HEK293 (cell line): ENCODE measurements at regions of chr11 and their contacts with region 1.

Region 1: GRCh38 chr11:96389720-96390487 is at the starts of genes CCDC82 and JRKL:
- H3K4me3 ChIP-seq: peak within 1 kb of the TSS; percentile 93
- H3K27ac ChIP-seq: peak within 1 kb of the TSS; percentile 86
- H3K4me1 ChIP-seq: no peaks in the 10 kb centered on the region
- CTCF ChIP-seq: no peak; the same call in 1 of the 2 replicates

Region 2: DNA sequence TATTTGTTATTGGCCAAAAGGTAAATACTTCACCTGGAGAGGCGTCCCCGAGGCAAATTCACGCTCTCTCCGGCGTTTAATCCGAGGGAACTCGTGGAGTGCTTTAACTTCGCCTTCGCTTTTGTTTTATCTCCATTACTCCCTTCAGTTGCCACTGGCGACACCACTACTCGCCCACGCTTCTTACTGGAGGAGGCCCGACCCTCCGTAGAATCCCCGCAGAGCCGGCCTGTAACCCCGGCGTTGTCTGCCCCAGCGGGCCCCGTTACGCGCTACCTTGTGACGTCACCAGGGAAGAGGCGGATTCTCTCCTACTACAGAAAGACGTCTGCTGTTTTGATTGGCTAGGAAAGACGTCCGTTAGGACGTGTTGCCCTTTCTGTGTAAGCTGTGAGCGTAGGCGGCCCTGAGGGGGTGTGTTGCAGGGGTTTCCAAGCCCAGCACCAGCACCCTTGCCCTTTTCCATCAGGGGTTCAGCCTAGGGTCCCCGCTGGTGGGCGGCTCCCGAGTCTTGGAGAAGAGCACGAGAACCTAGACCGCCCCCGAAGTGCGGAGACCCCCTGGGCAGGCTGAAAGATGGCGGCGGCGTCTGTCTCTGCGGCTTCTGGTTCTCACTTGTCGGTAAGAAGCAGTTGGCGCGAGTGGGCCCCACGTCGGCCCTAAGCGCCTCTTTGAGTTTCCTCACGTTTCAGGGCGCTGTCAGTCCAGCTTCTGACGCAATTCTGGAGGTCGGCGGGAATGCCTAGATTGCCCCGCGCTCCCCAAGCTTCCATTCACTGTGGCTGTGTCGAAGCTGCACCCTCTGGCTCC is 599.6 kb before region 1 on chr11 and contains the start of gene CEP57:
- CTCF ChIA-PET with region 1: no interaction called
- POLR2A ChIA-PET with region 1: interaction called, 19 read pairs
- H3K4me3 ChIP-seq: peak within 1 kb of the TSS; percentile 99
- H3K27ac ChIP-seq: peak within 1 kb of the TSS; percentile 80
- H3K4me1 ChIP-seq: no peaks in the 10 kb centered on the region
- CTCF ChIP-seq: no peak

Region 3: DNA sequence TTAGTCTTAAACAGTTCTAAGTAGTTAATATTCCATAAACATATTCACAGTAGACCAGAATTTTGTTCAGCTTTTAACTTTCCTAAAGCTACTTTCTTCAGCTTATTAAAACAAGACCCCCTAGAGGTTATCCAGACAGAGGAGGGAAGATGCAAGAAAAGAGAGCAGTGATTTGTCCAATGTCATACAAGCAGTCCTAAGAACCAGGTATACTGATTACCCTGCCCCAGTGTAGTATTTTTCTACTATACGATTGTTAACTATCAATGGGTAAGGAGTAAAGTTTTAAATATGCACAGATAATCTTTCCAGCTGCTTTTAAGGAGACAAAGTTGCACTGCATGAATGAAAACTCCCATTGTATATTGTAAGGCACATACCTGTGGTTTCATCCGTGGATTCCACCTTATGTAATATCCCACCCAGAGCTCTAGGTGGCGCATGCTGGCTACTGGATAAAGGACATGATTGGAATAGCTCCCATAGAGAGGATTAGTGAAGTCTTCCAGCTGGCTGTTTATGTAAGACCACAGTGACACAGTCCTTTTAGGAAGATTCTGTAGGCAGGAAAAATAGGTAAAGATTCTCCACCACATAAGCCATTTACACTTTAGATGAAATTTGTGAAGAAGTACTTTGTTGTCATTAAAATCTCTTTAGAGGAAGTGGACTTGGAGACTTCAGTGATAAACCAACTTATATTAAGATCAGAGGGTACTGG is 554.0 kb before region 1 on chr11:
- CTCF ChIA-PET with region 1: interaction called, 10 read pairs
- POLR2A ChIA-PET with region 1: no interaction called
- H3K4me3 ChIP-seq: no peak overlapping the region
- H3K27ac ChIP-seq: no peak overlapping the region
- H3K4me1 ChIP-seq: no peaks in the 10 kb centered on the region
- CTCF ChIP-seq: no peak

Region 4: GRCh38 chr11:95849087-95849825 is 540.6 kb before region 1 on chr11:
- CTCF ChIA-PET with region 1: interaction called, 14 read pairs
- POLR2A ChIA-PET with region 1: no interaction called
- H3K4me3 ChIP-seq: no peak overlapping the region
- H3K27ac ChIP-seq: no peak overlapping the region
- H3K4me1 ChIP-seq: no peaks in the 10 kb centered on the region
- CTCF ChIP-seq: no peak

Region 5: DNA sequence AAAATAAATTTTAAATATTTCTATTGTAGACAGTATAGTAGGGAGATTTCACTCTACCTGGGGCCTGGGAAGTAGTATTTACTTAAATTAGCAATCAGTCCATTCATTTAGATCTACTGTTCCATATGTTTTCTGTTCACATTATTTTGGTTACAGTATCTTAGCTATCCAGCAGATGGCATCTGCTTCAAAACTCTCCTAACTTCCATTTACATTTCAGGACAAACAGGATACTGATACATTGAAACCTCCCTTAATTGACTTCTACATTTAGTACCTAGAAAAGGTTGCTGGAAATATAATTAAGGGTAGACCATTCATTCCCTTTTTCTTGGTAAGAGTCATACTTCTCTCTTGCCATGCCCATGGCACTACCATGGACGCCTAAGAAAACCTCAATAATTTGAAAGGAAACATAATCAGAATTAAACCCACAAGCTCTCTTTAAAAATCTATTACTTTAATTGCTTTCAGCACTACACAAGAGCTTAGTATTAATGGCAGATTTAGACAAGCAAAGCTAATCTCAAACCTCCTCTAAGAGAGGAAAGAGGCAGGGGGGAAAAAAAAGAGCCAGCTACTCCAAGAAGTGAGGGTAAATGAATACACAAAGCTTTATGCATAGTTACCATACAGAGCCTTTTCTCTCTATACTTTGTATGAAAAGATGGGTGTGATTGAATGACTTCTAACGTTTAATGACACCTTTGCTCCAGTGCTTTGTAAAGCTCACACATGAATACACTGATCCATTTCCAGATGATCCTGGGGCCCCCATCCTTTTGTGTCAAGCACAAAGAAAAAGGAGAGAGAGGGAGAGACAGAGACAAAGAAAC is 334.8 kb before region 1 on chr11:
- CTCF ChIA-PET with region 1: interaction called, 16 read pairs
- POLR2A ChIA-PET with region 1: no interaction called
- H3K4me3 ChIP-seq: no peak overlapping the region
- H3K27ac ChIP-seq: no peak overlapping the region
- H3K4me1 ChIP-seq: no peaks in the 10 kb centered on the region
- CTCF ChIP-seq: no peak

Region 6: DNA sequence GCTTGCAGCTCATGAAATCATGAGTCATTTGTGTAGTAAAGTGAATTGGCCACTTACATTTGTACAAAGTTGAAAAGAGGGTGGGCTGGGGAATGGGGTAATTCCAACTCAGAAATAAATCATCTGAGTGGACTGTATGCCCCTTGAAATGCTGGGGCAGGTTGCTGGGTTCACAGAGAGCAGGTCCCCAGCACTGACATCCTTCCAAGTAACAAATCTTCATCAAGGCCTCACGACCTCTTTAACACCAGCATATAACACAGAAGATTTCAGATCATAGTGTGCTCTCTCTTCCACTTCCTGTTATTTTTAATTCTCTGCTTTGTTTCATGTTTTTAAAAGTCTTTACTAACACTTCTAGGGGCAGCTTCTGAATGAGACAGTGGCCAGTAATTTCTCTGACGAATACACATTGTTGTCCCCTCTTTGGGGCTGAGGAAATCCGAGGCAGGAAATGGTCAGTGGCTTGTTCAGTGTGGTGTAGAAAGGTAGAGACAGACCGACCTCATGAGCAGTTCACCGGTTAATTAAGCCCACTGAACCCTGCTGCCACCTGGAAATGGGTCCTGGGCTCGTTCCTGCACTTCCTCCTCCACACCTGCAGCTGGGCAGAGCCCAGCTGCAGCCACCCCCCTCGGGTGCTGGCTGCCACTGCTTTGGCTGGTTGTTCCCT is 174.7 kb before region 1 on chr11:
- CTCF ChIA-PET with region 1: no interaction called
- POLR2A ChIA-PET with region 1: no interaction called
- H3K4me3 ChIP-seq: no peak overlapping the region
- H3K27ac ChIP-seq: no peak overlapping the region
- H3K4me1 ChIP-seq: peaks cover under 1% of the 10 kb centered on the region; the same call in 1 of the 2 replicates
- CTCF ChIP-seq: no peak

Region 7: DNA sequence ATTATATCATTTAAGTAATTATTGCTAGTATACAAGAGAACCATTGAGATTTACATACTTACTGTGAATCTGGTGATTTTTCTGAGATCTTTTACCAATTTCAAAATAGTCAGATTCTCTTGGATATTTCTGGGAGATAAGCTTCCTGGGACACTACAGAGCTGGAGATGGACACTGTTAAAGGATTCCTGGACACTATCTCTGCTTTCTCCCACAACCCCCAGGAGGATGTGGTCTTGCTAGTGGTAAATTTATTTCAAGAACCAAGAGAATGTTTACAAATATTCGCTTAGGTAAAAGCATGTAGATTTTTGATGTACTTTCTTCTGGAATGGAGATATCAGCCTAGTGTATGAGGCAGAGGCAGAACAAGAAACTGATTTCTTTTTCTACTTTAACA is 13.1 kb before region 1 on chr11:
- CTCF ChIA-PET with region 1: no interaction called
- POLR2A ChIA-PET with region 1: no interaction called
- H3K4me3 ChIP-seq: no peak overlapping the region
- H3K27ac ChIP-seq: no peak overlapping the region
- H3K4me1 ChIP-seq: no peaks in the 10 kb centered on the region
- CTCF ChIP-seq: no peak

Region 8: DNA sequence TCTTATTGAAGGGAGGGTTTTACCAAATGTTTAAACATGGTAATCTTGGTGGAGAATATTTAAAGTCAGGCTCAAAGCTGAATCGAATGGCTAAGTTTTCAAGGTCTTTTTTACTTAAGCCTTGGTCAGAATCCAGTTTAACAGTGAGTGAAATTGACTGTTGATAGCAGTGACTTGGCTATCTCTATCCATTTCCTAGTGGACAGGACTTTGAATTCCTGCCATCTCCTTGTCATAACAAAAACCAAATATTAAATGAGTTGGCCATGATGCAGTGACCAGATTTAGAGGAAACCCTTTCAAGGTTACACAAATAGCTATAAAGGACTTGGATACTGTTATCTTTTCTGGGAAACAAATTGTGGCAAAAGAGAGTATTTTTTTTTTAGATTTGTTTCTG is 91.9 kb after region 1 on chr11:
- CTCF ChIA-PET with region 1: no interaction called
- POLR2A ChIA-PET with region 1: no interaction called
- H3K4me3 ChIP-seq: no peak overlapping the region
- H3K27ac ChIP-seq: no peak overlapping the region
- H3K4me1 ChIP-seq: no peaks in the 10 kb centered on the region
- CTCF ChIP-seq: no peak

Region 9: DNA sequence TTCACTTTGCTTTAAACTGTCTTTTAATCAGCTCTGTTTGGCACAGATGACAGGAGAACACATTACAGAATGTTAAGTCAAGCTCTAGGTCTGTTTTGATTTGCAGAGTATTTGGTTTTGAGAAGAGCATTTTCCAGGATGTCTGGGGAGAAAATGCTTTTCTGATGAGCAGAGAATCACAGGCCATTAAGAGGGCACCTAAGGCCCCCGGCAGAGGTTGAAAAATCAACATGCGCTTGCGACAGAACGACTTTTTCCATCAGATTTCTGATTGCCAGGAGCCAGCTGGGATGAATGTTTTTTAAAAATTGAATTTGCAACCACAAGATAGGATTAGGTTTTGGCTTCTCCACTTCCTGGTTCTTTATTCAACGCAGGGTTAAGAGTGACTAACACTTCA is 304.4 kb after region 1 on chr11:
- CTCF ChIA-PET with region 1: no interaction called
- POLR2A ChIA-PET with region 1: no interaction called
- H3K4me3 ChIP-seq: no peak overlapping the region
- H3K27ac ChIP-seq: no peak overlapping the region
- H3K4me1 ChIP-seq: no peaks in the 10 kb centered on the region
- CTCF ChIP-seq: no peak